ENCODE measurements at regions of chr7 and their contacts with region 1.

Region 1: DNA sequence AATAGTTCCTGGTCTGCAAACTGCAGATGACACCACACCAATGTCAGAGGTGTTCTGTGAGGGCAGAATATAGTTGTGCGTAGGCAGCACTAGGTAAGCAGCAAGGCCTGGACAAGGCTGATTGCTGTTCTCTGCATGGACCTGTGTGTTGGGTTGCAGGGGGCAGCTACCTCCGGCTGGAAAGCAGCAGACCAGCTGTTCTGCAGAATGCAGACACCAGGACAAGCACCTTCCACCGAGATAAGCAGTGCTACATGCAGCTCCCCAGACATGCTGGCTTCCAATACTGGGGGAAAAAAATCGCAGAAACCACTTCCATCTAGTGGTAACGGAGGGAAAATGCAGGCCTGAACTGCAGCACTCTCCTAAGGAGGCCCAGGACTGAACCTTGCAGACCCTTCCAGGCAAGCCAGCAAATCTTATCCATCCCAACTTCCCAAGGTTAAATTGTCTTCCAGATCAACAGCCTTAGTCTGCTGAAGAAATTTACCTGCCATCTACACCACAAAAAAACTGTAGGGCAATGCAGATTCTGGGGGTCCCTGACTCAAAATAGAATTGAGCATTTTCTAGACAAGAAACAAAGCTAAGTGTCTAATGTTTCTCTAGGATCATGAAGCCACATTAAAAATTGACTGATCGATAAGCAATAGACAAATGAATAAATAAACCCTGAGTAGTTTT is 50.5 kb upstream of the COBL start:
- DNase-seq: peak; percentile 58
- ATAC-seq: peak; percentile 95
- H3K4me3 Mint-ChIP-seq: no peak overlapping the region
- H3K27ac Mint-ChIP-seq: no peak overlapping the region
- H3K4me1 Mint-ChIP-seq: peaks cover 25% of the 10 kb centered on the region
- H3K27me3 Mint-ChIP-seq: no peaks in the 10 kb centered on the region; the same call in 1 of the 2 replicates
- CTCF ChIP-seq: peak; percentile 64

Region 2: GRCh38 chr7:51187941-51188340 is 179.1 kb before region 1 on chr7:
- CTCF ChIA-PET with region 1: interaction called, 108 read pairs
- POLR2A ChIA-PET with region 1: interaction called, 3 read pairs
- DNase-seq: peak; percentile 84
- ATAC-seq: peak; percentile 100
- H3K4me3 Mint-ChIP-seq: no peak overlapping the region
- H3K27ac Mint-ChIP-seq: peak overlapping the region; percentile 89
- H3K4me1 Mint-ChIP-seq: peaks cover 9% of the 10 kb centered on the region
- H3K27me3 Mint-ChIP-seq: no peaks in the 10 kb centered on the region
- CTCF ChIP-seq: no peak; the same call in 1 of the 2 replicates

Region 3: GRCh38 chr7:51255536-51256208 is 111.4 kb before region 1 on chr7:
- CTCF ChIA-PET with region 1: interaction called, 17 read pairs
- POLR2A ChIA-PET with region 1: no interaction called
- DNase-seq: no peak
- ATAC-seq: peak; percentile 55
- H3K4me3 Mint-ChIP-seq: no peak overlapping the region
- H3K27ac Mint-ChIP-seq: peak overlapping the region; percentile 44; the same call in 1 of the 2 replicates
- H3K4me1 Mint-ChIP-seq: peaks cover 18% of the 10 kb centered on the region
- H3K27me3 Mint-ChIP-seq: no peaks in the 10 kb centered on the region
- CTCF ChIP-seq: no peak

Region 4: GRCh38 chr7:51275532-51275931 is 91.5 kb before region 1 on chr7:
- CTCF ChIA-PET with region 1: interaction called, 10 read pairs
- POLR2A ChIA-PET with region 1: no interaction called
- DNase-seq: no peak
- ATAC-seq: no peak
- H3K4me3 Mint-ChIP-seq: no peak overlapping the region
- H3K27ac Mint-ChIP-seq: no peak overlapping the region
- H3K4me1 Mint-ChIP-seq: peaks cover 37% of the 10 kb centered on the region
- H3K27me3 Mint-ChIP-seq: no peaks in the 10 kb centered on the region
- CTCF ChIP-seq: no peak

Region 5: GRCh38 chr7:51308265-51308664 is 58.8 kb before region 1 on chr7:
- CTCF ChIA-PET with region 1: interaction called, 37 read pairs
- POLR2A ChIA-PET with region 1: no interaction called
- DNase-seq: no peak
- ATAC-seq: no peak
- H3K4me3 Mint-ChIP-seq: no peak overlapping the region
- H3K27ac Mint-ChIP-seq: peak overlapping the region; percentile 57
- H3K4me1 Mint-ChIP-seq: peaks cover 70% of the 10 kb centered on the region
- H3K27me3 Mint-ChIP-seq: no peaks in the 10 kb centered on the region
- CTCF ChIP-seq: no peak

Region 6: DNA sequence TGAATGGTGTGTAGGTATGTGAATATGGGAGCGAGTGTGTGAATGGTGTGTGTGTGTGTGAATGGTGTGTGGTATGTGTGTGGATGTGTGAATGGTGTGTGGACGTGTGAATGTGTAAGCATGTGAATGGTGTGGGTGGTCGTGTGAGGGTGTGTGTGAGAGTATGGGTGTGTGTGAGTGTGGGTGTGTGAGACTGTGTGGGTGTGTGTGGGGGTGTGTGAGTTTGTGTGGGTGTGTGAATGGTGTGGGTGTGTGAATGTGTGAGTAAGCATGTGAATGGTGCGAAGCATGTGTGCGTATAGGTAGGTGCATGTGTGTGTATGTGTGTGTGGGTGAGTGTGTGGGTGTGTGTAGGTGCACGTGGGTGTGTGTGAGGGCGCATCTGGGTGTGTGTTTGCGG is 110.3 kb after region 1 on chr7:
- CTCF ChIA-PET with region 1: no interaction called
- POLR2A ChIA-PET with region 1: no interaction called
- DNase-seq: no peak
- ATAC-seq: no peak
- H3K4me3 Mint-ChIP-seq: no peak overlapping the region
- H3K27ac Mint-ChIP-seq: no peak overlapping the region
- H3K4me1 Mint-ChIP-seq: no peaks in the 10 kb centered on the region
- H3K27me3 Mint-ChIP-seq: peaks cover 8% of the 10 kb centered on the region; the same call in 1 of the 2 replicates
- CTCF ChIP-seq: no peak

Measured in WTC11 (cell line).